ENCODE measurements at regions of chr18 and their contacts with region 1.

Region 1: GRCh38 chr18:3593904-3594661 is 144.1 kb downstream of the TGIF1 start:
- DNase-seq: peak; percentile 84 to 97 (median 85)
- ATAC-seq: peak; percentile 79
- H3K4me3 ChIP-seq: no peak overlapping the region
- H3K4me1 ChIP-seq: peaks cover 43% of the 10 kb centered on the region
- CTCF ChIP-seq: peak; percentile 91

Region 2: DNA sequence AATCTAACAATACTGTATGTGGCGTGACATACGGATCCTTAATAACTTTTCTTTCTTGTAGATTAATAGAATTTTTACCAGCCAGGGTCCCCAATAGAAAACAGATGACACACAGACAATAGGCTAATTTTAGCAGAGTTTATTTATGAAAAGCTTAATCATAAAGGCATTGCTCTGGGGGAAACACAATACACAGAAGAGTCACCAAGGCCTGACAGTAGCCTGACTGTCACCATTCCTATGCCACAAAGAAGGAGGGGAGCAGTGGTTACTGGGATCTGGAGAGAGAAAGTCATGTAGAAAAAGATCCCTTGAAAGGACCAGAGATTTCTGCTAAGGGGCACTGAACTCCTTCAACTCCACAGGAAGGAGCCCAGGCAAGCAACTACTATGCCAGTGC is 1162.3 kb before region 1 on chr18:
- intact Hi-C with region 1: no loop called
- DNase-seq: no peak
- ATAC-seq: no peak
- H3K4me3 ChIP-seq: no peak overlapping the region
- H3K4me1 ChIP-seq: no peaks in the 10 kb centered on the region
- CTCF ChIP-seq: no peak

Region 3: GRCh38 chr18:3261371-3262246 is 332.5 kb before region 1 on chr18 and contains the start of gene MYL12B:
- intact Hi-C with region 1: loop called in 1 of 2 experiments (anchors 10 kb)
- DNase-seq: peak; percentile 91 to 93 (median 92)
- ATAC-seq: peak; percentile 92
- H3K4me3 ChIP-seq: peak within 1 kb of the TSS; percentile 82
- H3K4me1 ChIP-seq: peaks cover 38% of the 10 kb centered on the region
- CTCF ChIP-seq: no peak
- total RNA-seq, gene MYL12B: 317 to 609 (median 569) TPM

Region 4: GRCh38 chr18:3397071-3397745 is 196.9 kb before region 1 on chr18:
- intact Hi-C with region 1: no loop called
- DNase-seq: no peak
- ATAC-seq: peak; percentile 55
- H3K4me3 ChIP-seq: no peak overlapping the region
- H3K4me1 ChIP-seq: no peaks in the 10 kb centered on the region
- CTCF ChIP-seq: no peak

Region 5: GRCh38 chr18:3447895-3448837 is 145.9 kb before region 1 on chr18:
- intact Hi-C with region 1: loop called (anchors 5 kb)
- DNase-seq: peak; percentile 93 to 97 (median 96)
- ATAC-seq: peak; percentile 79
- H3K4me3 ChIP-seq: peak overlapping the region; percentile 85
- H3K4me1 ChIP-seq: peaks cover 6% of the 10 kb centered on the region
- CTCF ChIP-seq: no peak

Region 6: GRCh38 chr18:4369705-4370104 is 775.6 kb after region 1 on chr18:
- intact Hi-C with region 1: no loop called
- DNase-seq: no peak
- ATAC-seq: no peak
- H3K4me3 ChIP-seq: no peak overlapping the region
- H3K4me1 ChIP-seq: no peaks in the 10 kb centered on the region
- CTCF ChIP-seq: no peak